CD8-positive, alpha-beta T cell (primary cell): ENCODE measurements at regions of chr6 and their contacts with region 1.

Region 1: GRCh38 chr6:27472617-27473400 is at the start of gene ZNF184:
- DNase-seq: peak; percentile 71 to 94 (median 84)
- ATAC-seq: peak; percentile 63
- H3K4me3 ChIP-seq: peak within 1 kb of the TSS; percentile 80 to 90
- H3K4me3 Mint-ChIP-seq: peak within 1 kb of the TSS; percentile 96
- H3K27ac ChIP-seq: peak within 1 kb of the TSS; percentile 94 to 96
- H3K27ac Mint-ChIP-seq: peak within 1 kb of the TSS; percentile 96
- H3K4me1 ChIP-seq: peaks cover 26% of the 10 kb centered on the region
- H3K4me1 Mint-ChIP-seq: peaks cover 48% of the 10 kb centered on the region
- H3K27me3 ChIP-seq: no peaks in the 10 kb centered on the region
- H3K27me3 Mint-ChIP-seq: no peaks in the 10 kb centered on the region
- CTCF ChIP-seq: no peak
- total RNA-seq, gene ZNF184: 31.8 to 32.9 TPM

Region 2: GRCh38 chr6:27188885-27189418 is 283.9 kb before region 1 on chr6:
- CTCF ChIA-PET with region 1: no interaction called
- POLR2A ChIA-PET with region 1: no interaction called
- intact Hi-C with region 1: loop called in 1 of 2 experiments (anchors 2 kb)
- DNase-seq: peak in 8 of 9 experiments; percentile 24 to 86 (median 50)
- ATAC-seq: peak; percentile 77
- H3K4me3 ChIP-seq: peak overlapping the region; percentile 58 to 62
- H3K4me3 Mint-ChIP-seq: peak overlapping the region; percentile 87
- H3K27ac ChIP-seq: peak overlapping the region in 1 of 2 experiments; percentile 33
- H3K27ac Mint-ChIP-seq: no peak overlapping the region
- H3K4me1 ChIP-seq: peaks cover 4% of the 10 kb centered on the region
- H3K4me1 Mint-ChIP-seq: peaks cover 10% of the 10 kb centered on the region
- H3K27me3 ChIP-seq: no peaks in the 10 kb centered on the region
- H3K27me3 Mint-ChIP-seq: no peaks in the 10 kb centered on the region
- CTCF ChIP-seq: peak; percentile 66

Region 3: GRCh38 chr6:27388293-27389197 is 84.3 kb before region 1 on chr6 and contains the start of gene ZNF391:
- CTCF ChIA-PET with region 1: no interaction called
- POLR2A ChIA-PET with region 1: interaction called, 4 read pairs
- intact Hi-C with region 1: loop called (anchors 1 to 5 kb)
- DNase-seq: peak; percentile 41 to 86 (median 67)
- ATAC-seq: peak; percentile 90
- H3K4me3 ChIP-seq: peak within 1 kb of the TSS; percentile 66 to 72
- H3K4me3 Mint-ChIP-seq: peak within 1 kb of the TSS; percentile 98
- H3K27ac ChIP-seq: peak within 1 kb of the TSS; percentile 45 to 55
- H3K27ac Mint-ChIP-seq: peak within 1 kb of the TSS; percentile 94
- H3K4me1 ChIP-seq: peaks cover 9% of the 10 kb centered on the region
- H3K4me1 Mint-ChIP-seq: peaks cover 15% of the 10 kb centered on the region
- H3K27me3 ChIP-seq: no peaks in the 10 kb centered on the region
- H3K27me3 Mint-ChIP-seq: no peaks in the 10 kb centered on the region
- CTCF ChIP-seq: no peak
- total RNA-seq, gene ZNF391: 0.72 to 1.1 TPM

Region 4: GRCh38 chr6:28080631-28081485 is 608.0 kb after region 1 on chr6:
- CTCF ChIA-PET with region 1: no interaction called
- POLR2A ChIA-PET with region 1: no interaction called
- intact Hi-C with region 1: loop called (anchors 5 to 10 kb)
- DNase-seq: peak; percentile 86 to 96 (median 94)
- ATAC-seq: peak; percentile 74
- H3K4me3 ChIP-seq: peak overlapping the region; percentile 69 to 93
- H3K4me3 Mint-ChIP-seq: peak overlapping the region; percentile 98
- H3K27ac ChIP-seq: peak overlapping the region; percentile 91 to 96
- H3K27ac Mint-ChIP-seq: peak overlapping the region; percentile 99
- H3K4me1 ChIP-seq: peaks cover 13% of the 10 kb centered on the region
- H3K4me1 Mint-ChIP-seq: peaks cover 21% of the 10 kb centered on the region
- H3K27me3 ChIP-seq: no peaks in the 10 kb centered on the region
- H3K27me3 Mint-ChIP-seq: no peaks in the 10 kb centered on the region
- CTCF ChIP-seq: no peak